ENCODE measurements at regions of chr2 and their contacts with region 1.

Region 1: DNA sequence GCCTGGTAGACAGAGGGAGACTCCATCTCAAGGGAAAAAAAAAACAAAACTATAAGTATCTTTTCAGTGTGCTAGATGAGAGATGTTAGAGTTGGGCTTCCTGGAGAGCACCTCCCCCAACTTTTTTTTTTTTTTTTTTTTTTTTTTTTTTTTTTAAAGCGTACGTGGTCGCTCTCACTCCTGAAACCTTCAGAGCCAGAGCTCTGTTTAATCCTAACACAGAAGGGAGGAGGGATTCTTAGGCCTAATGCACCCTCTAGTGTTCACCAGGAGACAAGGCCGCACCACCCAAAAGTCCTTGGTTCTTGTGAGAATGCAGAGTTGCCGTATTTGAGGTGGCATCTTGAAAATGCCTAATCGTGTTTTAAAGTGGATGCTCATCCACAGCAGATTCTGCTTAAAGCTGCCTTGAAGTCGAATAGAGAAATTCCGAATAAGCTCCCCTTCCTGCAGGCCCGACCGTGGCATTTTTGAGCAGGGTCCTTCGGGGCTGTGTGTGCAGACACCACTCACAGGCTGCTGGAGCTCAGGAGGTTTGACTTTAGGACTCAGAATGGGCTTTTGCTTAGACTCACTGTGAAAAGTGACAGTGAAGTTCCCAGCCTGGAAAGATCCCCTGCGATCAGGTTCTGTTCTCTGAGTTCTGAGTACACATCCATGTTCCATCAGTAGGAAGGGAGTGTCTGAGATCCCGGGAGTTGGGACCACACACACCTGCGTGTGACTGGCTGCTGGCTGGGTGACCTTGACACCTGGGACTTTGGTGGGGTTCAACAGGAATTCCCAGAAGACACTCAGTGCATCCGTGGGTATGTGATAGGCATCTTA is 252.6 kb downstream of the AGAP1 start:
- DNase-seq: peak in 2 of 4 donors; percentile 65 to 87
- ATAC-seq: peak; percentile 97
- H3K4me3 ChIP-seq: no peak overlapping the region
- H3K27ac ChIP-seq: no peak overlapping the region
- H3K4me1 ChIP-seq: no peaks in the 10 kb centered on the region
- H3K27me3 ChIP-seq: no peaks in the 10 kb centered on the region
- CTCF ChIP-seq: peak; percentile 78 to 81

Region 2: GRCh38 chr2:235135990-235136561 is 610.4 kb before region 1 on chr2:
- intact Hi-C with region 1: loop called in 1 of 2 experiments (anchors 10 kb)
- DNase-seq: peak in 3 of 4 donors; percentile 51 to 83 (median 61)
- ATAC-seq: peak; percentile 94
- H3K4me3 ChIP-seq: no peak overlapping the region
- H3K27ac ChIP-seq: no peak overlapping the region
- H3K4me1 ChIP-seq: no peaks in the 10 kb centered on the region
- H3K27me3 ChIP-seq: no peaks in the 10 kb centered on the region
- CTCF ChIP-seq: peak; percentile 73 to 75

Region 3: DNA sequence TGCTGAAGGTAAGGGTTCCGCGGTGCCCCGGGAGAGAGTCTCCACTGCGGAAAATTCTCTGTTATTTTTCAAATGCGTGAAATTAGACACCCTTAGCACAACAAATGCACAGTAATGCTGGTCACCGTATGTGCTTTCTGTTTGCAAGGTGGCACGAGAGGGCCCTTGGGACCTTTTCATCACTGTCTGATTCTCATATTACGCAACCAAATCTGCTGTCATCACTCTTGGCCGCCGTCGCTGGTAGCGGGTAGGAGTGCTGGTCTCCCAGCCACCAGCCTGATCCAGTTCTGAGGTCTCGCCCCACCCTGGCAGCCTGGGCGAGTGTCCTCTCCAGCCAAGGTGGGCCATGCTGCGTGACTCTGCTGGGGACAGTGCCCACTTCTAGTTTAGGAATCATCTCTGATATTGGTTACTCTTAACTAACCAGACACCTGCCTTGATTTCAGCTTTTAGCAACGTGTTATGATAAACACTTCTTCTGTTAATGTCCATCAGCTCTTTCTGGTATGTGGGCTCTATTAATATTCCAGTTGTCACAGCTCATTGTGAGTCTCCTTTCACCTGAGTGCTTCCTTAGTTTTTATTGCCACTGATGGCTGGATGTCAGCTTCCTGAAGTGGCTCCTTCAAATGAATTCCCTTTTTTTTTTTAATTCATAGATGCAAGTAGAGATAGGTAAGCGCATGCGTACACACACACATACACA is 222.3 kb after region 1 on chr2:
- intact Hi-C with region 1: no loop called
- DNase-seq: no peak
- ATAC-seq: no peak
- H3K4me3 ChIP-seq: no peak overlapping the region
- H3K27ac ChIP-seq: no peak overlapping the region
- H3K4me1 ChIP-seq: no peaks in the 10 kb centered on the region
- H3K27me3 ChIP-seq: no peaks in the 10 kb centered on the region
- CTCF ChIP-seq: no peak

Region 4: DNA sequence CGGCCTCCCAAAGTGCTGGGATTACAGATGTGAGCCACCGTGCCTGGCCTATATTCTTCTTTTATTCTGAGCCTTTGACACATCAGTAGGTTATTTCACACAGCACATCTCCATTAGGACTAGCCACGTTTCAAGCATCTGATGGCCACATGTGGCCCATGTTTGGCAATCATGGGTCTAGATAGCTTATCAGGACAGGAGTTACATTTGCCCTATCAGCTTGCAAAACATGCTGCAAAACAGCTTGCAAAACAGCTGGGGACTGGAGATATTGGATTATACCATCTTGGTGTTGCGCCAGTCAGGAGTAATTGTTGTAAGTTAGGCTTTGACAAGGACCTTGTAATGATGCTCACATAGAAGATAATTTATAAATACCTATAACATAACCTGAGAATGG is 326.8 kb after region 1 on chr2:
- intact Hi-C with region 1: no loop called
- DNase-seq: no peak
- ATAC-seq: no peak
- H3K4me3 ChIP-seq: no peak overlapping the region
- H3K27ac ChIP-seq: no peak overlapping the region
- H3K4me1 ChIP-seq: no peaks in the 10 kb centered on the region
- H3K27me3 ChIP-seq: no peaks in the 10 kb centered on the region
- CTCF ChIP-seq: no peak

Region 5: GRCh38 chr2:236473691-236474090 is 727.2 kb after region 1 on chr2:
- intact Hi-C with region 1: no loop called
- DNase-seq: no peak
- ATAC-seq: no peak
- H3K4me3 ChIP-seq: no peak overlapping the region
- H3K27ac ChIP-seq: no peak overlapping the region
- H3K4me1 ChIP-seq: no peaks in the 10 kb centered on the region
- H3K27me3 ChIP-seq: no peaks in the 10 kb centered on the region
- CTCF ChIP-seq: no peak

Measured in left lung (tissue), 14 donors.